K562 (cell line): ENCODE measurements at regions of chr12 and their contacts with region 1.

Region 1: GRCh38 chr12:114662512-114663177 is 21.3 kb downstream of the TBX3 start:
- DNase-seq: peak; percentile 57 to 69 (median 68)
- ATAC-seq: peak; percentile 75
- H3K4me3 ChIP-seq: no peak overlapping the region
- H3K27ac ChIP-seq: no peak overlapping the region
- H3K4me1 ChIP-seq: peaks cover 0 to 8% of the 10 kb centered on the region in 2 experiments; a peak in 2 of 5 replicates
- H3K27me3 ChIP-seq: peaks cover 15 to 19% of the 10 kb centered on the region in 2 experiments; a peak in 3 of 5 replicates
- CTCF ChIP-seq: peak; percentile 79 to 88 (median 85)
- EP300 ChIP-seq: no peak
- POLR2A ChIP-seq: no peak
- RAD21 ChIP-seq: peak; percentile 81 to 89

Region 2: GRCh38 chr12:114752217-114752616 is 89.6 kb after region 1 on chr12:
- CTCF ChIA-PET with region 1: no interaction called
- POLR2A ChIA-PET with region 1: no interaction called
- in situ Hi-C with region 1: no loop called
- intact Hi-C with region 1: no loop called
- DNase-seq: no peak
- ATAC-seq: no peak
- H3K4me3 ChIP-seq: no peak overlapping the region
- H3K27ac ChIP-seq: no peak overlapping the region
- H3K4me1 ChIP-seq: no peaks in the 10 kb centered on the region
- H3K27me3 ChIP-seq: peaks cover 2 to 21% of the 10 kb centered on the region in 2 experiments; a peak in 4 of 5 replicates
- CTCF ChIP-seq: no peak
- EP300 ChIP-seq: no peak
- POLR2A ChIP-seq: no peak
- RAD21 ChIP-seq: no peak

Region 3: DNA sequence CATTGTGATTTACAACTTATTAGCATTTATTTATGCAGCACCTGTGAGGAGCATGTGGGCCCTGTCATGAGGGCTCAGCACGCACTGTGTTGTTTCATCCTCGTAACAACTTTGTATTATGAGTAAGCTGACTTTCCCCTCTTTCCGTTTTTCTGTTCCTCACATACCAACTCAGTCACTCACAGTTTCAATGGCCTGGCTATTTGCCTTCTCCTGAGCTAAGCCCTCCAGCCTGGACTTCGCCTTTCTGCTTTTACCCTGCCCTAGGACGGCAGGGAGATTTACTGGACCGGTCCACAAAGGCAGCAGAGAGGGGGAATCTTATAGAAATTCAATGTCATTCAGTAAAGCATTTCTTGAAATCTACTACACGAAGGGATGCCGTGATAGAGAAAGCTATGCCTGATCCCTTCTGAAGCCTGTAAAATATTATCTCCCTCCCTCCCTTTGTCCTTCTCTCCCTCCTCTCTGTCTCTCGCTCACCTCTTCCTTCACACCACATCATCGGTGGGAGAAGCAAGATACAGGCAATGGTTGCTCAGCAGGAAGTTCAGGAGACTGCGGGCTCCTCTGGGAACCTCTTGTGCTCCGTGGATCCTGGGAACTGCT is 240.5 kb after region 1 on chr12:
- CTCF ChIA-PET with region 1: no interaction called
- POLR2A ChIA-PET with region 1: no interaction called
- in situ Hi-C with region 1: no loop called
- intact Hi-C with region 1: no loop called
- DNase-seq: no peak
- ATAC-seq: no peak
- H3K4me3 ChIP-seq: no peak overlapping the region
- H3K27ac ChIP-seq: no peak overlapping the region
- H3K4me1 ChIP-seq: no peaks in the 10 kb centered on the region
- H3K27me3 ChIP-seq: no peaks in the 10 kb centered on the region
- CTCF ChIP-seq: no peak
- EP300 ChIP-seq: no peak
- POLR2A ChIP-seq: no peak
- RAD21 ChIP-seq: no peak

Region 4: GRCh38 chr12:115632308-115632707 is 969.7 kb after region 1 on chr12:
- CTCF ChIA-PET with region 1: no interaction called
- POLR2A ChIA-PET with region 1: no interaction called
- in situ Hi-C with region 1: no loop called
- intact Hi-C with region 1: loop called (anchors 10 kb)
- DNase-seq: no peak
- ATAC-seq: no peak
- H3K4me3 ChIP-seq: no peak overlapping the region
- H3K27ac ChIP-seq: no peak overlapping the region
- H3K4me1 ChIP-seq: no peaks in the 10 kb centered on the region
- H3K27me3 ChIP-seq: no peaks in the 10 kb centered on the region; a peak in 1 of 5 replicates
- CTCF ChIP-seq: peak in 1 of 3 experiments; percentile 11; a peak in 1 of 6 replicates
- EP300 ChIP-seq: no peak
- POLR2A ChIP-seq: no peak
- RAD21 ChIP-seq: peak in 1 of 2 experiments; percentile 25; a peak in 2 of 4 replicates